Activated B cell treated with CpG ODN at 0.5 μM for 24 hours (primary cell): ENCODE measurements at regions of chr19 and their contacts with region 1.

Region 1: DNA sequence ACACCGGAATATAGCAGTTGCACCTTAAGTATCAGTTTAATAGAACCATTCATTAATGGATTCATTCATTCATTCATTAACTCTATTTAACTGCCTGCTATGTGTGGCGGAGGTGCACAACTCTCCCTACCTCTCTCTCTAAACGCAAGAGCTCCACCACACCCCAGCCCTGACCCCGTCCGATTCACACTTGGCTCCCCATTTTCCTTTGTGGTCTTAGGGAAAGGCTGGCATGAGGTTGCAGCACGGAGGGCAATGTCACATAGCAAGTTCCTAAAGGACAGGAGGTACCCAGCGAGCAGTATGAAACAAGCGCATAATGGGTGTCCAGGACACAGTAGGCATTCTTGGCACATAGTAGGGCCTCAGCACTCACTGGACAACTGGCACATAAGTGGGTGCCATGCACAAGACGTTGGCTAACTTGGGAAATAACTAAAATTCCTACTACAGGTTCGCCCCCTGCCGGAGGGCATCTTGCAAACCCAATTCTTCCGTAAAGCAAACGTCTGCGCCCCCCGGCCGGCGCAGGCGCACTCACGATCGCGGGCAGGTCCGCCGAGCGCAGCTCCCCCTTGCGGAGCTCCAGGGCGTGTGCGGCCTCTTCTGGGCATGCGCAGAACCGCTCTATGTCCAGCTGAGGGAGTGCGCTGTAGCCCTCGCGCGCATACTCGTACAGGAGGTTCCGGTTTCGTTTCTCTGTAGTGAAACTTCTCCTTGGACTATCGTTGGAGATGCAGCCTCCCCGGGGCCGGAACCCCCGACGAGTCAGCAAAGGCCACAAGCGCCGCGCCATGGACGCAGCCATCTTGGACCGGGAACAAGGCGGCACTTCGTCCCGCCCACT is at the start of gene SARS2:
- DNase-seq: peak; percentile 93
- ATAC-seq: peak; percentile 71
- H3K4me3 Mint-ChIP-seq: peak within 1 kb of the TSS; percentile 97
- H3K27ac Mint-ChIP-seq: peak within 1 kb of the TSS; percentile 98
- H3K4me1 Mint-ChIP-seq: peaks cover 34% of the 10 kb centered on the region
- H3K27me3 Mint-ChIP-seq: no peaks in the 10 kb centered on the region
- CTCF ChIP-seq: peak; percentile 100
- total RNA-seq, gene SARS2: 46.4 and 50.9 TPM in 2 replicates

Region 2: DNA sequence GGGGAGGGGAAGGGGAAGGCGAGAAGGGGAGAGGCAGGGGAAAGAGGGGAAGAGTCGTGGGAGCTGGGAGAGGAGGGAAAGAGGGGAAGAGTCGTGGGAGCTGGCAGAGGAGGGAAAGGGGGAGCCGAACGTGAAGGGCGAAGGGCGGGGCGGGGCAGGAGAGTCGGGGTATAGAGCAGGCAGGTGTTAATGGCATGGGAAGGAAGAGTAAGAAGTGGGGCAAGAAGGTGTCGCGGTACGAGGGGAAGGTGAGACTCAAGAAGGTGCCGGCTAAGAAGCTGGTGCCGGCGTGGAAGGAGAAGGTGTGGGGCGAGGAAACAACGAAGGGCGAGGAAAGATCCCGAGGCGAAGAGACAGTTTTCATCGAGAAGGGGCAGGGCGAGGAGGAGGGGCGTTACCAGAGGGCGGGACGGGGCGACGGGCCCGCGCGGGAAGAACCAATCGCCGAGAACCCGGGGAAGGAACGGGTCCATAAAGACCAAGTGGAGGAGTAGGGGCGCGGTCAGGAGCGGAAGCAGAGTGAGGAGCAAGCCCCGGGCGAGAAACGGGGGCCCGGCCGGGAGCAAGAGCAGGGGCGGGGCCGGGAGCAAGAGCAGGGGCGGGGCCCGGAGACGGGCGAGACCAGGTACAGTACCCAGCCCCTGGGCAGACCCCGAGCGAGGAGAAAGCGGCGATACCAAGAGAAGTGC is 594.1 kb before region 1 on chr19:
- CTCF ChIA-PET with region 1: no interaction called
- POLR2A ChIA-PET with region 1: no interaction called
- intact Hi-C with region 1: loop called (anchors 1 kb)
- DNase-seq: peak; percentile 91
- ATAC-seq: peak; percentile 64
- H3K4me3 Mint-ChIP-seq: peak overlapping the region; percentile 91
- H3K27ac Mint-ChIP-seq: peak overlapping the region; percentile 97
- H3K4me1 Mint-ChIP-seq: peaks cover 8% of the 10 kb centered on the region
- H3K27me3 Mint-ChIP-seq: no peaks in the 10 kb centered on the region
- CTCF ChIP-seq: no peak

Region 3: GRCh38 chr19:38544034-38544958 is 385.9 kb before region 1 on chr19:
- CTCF ChIA-PET with region 1: interaction called, 12 read pairs
- POLR2A ChIA-PET with region 1: no interaction called
- intact Hi-C with region 1: loop called (anchors 1 kb)
- DNase-seq: no peak
- ATAC-seq: peak; percentile 65
- H3K4me3 Mint-ChIP-seq: peak overlapping the region; percentile 11
- H3K27ac Mint-ChIP-seq: peak overlapping the region; percentile 30
- H3K4me1 Mint-ChIP-seq: peaks cover 33% of the 10 kb centered on the region
- H3K27me3 Mint-ChIP-seq: no peaks in the 10 kb centered on the region
- CTCF ChIP-seq: peak; percentile 41

Region 4: DNA sequence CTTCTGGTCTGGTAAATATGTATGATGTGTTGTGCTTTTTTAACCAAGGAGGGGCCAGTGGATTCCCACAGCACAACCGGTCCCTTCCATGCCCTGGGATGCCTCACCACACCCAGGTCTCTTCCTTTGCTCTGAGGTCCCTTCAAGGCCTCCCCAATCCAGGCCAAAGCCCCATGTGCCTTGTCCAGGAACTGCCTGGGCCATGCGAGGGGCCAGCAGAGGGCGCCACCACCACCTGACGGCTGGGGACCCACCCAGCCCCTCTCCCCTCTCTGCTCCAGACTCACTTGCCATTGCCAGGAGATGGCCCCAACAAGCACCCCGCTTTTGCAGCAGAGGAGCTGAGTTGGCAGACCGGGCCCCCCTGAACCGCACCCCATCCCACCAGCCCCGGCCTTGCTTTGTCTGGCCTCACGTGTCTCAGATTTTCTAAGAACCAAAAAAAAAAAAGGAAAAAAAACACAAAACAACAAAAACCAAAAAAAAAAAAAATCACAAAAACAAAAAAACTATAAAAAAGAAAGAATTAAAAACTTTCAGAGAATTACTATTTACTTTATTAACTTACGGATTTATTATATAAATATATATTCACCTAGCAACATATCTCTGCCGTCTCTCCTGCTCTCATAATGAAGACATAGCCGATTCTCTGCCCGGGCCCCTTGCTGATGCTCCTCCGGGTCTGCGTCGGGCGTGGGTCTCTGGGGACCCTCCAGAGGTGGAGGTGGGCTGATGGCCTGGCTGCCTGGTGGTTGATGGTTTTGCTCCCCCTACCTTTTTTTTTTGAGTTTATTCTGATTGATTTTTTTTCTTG is 200.3 kb before region 1 on chr19:
- CTCF ChIA-PET with region 1: interaction called, 25 read pairs
- POLR2A ChIA-PET with region 1: interaction called, 16 read pairs
- intact Hi-C with region 1: loop called (anchors 1 kb)
- DNase-seq: peak; percentile 79
- ATAC-seq: peak; percentile 77
- H3K4me3 Mint-ChIP-seq: no peak overlapping the region
- H3K27ac Mint-ChIP-seq: peak overlapping the region; percentile 46
- H3K4me1 Mint-ChIP-seq: peaks cover 25% of the 10 kb centered on the region
- H3K27me3 Mint-ChIP-seq: no peaks in the 10 kb centered on the region
- CTCF ChIP-seq: peak; percentile 54

Region 5: GRCh38 chr19:38743394-38744295 is 186.5 kb before region 1 on chr19:
- CTCF ChIA-PET with region 1: no interaction called
- POLR2A ChIA-PET with region 1: no interaction called
- intact Hi-C with region 1: no loop called
- DNase-seq: no peak
- ATAC-seq: no peak
- H3K4me3 Mint-ChIP-seq: no peak overlapping the region
- H3K27ac Mint-ChIP-seq: no peak overlapping the region
- H3K4me1 Mint-ChIP-seq: no peaks in the 10 kb centered on the region
- H3K27me3 Mint-ChIP-seq: no peaks in the 10 kb centered on the region
- CTCF ChIP-seq: no peak

Region 6: GRCh38 chr19:38812841-38813320 is 117.3 kb before region 1 on chr19 and contains the start of gene LGALS4:
- CTCF ChIA-PET with region 1: no interaction called
- POLR2A ChIA-PET with region 1: no interaction called
- intact Hi-C with region 1: no loop called
- DNase-seq: no peak
- ATAC-seq: no peak
- H3K4me3 Mint-ChIP-seq: no peak within 1 kb of the TSS
- H3K27ac Mint-ChIP-seq: peak within 1 kb of the TSS; percentile 2
- H3K4me1 Mint-ChIP-seq: no peaks in the 10 kb centered on the region
- H3K27me3 Mint-ChIP-seq: no peaks in the 10 kb centered on the region
- CTCF ChIP-seq: no peak
- total RNA-seq, gene LGALS4: 2.7 and 4.5 TPM in 2 replicates

Region 7: DNA sequence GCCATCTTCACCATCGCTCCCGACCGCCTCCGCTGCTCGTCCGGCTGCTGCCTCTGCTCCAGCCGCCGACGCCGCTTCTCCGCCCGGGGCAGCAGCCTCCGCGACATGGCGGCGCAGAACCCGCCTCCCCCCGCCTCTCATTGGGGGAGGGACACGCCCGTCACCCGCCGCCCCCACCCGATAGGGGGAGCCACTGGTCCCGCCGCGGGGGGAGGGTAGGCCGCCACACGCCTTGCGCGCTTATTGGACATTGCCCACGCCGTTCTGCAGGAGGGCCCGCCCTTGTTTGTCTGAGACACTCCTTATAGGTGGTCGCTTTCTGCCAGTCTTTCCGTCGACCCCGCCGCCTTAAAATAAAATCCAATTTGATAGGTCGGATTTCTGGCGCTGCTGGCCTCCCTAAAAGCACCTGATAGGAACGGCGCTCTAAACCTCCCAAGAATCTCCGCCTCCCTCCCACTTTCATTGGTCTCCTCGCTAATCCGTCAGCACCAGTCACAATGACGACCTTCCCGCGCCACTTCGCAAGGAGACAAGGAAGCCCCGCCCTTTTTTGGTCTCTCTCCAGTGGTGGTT is 80.2 kb before region 1 on chr19 and contains the start of gene HNRNPL:
- CTCF ChIA-PET with region 1: no interaction called
- POLR2A ChIA-PET with region 1: interaction called, 24 read pairs
- intact Hi-C with region 1: loop called (anchors 1 kb)
- DNase-seq: peak; percentile 99
- ATAC-seq: peak; percentile 61
- H3K4me3 Mint-ChIP-seq: peak within 1 kb of the TSS; percentile 93
- H3K27ac Mint-ChIP-seq: peak within 1 kb of the TSS; percentile 98
- H3K4me1 Mint-ChIP-seq: peaks cover 61% of the 10 kb centered on the region
- H3K27me3 Mint-ChIP-seq: no peaks in the 10 kb centered on the region
- CTCF ChIP-seq: no peak
- total RNA-seq, gene HNRNPL: 528 and 546 TPM in 2 replicates

Region 8: GRCh38 chr19:38899447-38900219 is 30.5 kb before region 1 on chr19 and contains the starts of genes NFKBIB and SIRT2:
- CTCF ChIA-PET with region 1: interaction called, 10 read pairs
- POLR2A ChIA-PET with region 1: interaction called, 22 read pairs
- intact Hi-C with region 1: loop called (anchors 1 kb)
- DNase-seq: peak; percentile 91
- ATAC-seq: peak; percentile 91
- H3K4me3 Mint-ChIP-seq: peak within 1 kb of the TSS; percentile 91
- H3K27ac Mint-ChIP-seq: peak within 1 kb of the TSS; percentile 87
- H3K4me1 Mint-ChIP-seq: peaks cover 41% of the 10 kb centered on the region
- H3K27me3 Mint-ChIP-seq: no peaks in the 10 kb centered on the region
- CTCF ChIP-seq: no peak
- total RNA-seq, gene NFKBIB: 45.5 and 49.5 TPM in 2 replicates
- total RNA-seq, gene SIRT2: 28.4 and 32.7 TPM in 2 replicates

Region 9: DNA sequence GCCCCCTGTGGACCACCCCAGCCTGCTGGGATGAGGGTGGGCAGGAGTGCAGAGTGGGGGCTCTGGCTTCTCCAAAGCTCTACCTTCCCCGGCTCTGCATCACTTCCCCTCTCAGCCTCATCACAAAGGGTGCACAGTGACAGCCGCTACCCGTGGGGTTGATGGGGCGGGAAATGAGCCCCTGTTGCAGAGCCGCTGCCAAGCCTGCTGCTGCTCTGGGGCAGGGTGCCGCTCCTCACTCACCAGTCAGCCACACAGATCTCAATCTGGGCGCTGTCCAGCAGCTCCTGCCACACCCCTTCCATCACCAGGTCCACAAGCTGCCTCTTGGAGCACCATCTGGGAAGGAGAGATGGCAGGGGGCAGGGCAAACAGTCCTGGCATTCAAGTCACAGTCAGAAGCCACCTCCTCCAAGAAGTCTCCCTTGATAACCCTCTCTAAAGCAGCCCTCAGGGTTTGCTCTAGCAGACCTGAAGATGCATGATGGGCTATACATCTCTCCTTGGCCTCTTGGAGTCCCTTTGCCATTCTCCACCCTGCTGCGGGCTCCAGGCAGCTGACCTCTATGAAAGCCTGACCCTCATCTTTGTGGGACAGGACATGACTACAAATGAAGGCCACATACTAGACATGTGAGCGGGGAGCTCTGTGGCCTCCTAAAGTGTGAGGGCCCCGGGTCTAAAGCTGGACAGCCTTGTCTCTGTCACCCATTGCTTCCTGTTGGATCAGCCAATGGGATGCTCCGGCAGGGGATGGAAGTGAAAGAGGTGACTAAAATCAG is 16.3 kb after region 1 on chr19:
- CTCF ChIA-PET with region 1: no interaction called
- POLR2A ChIA-PET with region 1: no interaction called
- intact Hi-C with region 1: no loop called
- DNase-seq: no peak
- ATAC-seq: no peak
- H3K4me3 Mint-ChIP-seq: no peak overlapping the region
- H3K27ac Mint-ChIP-seq: no peak overlapping the region
- H3K4me1 Mint-ChIP-seq: peaks cover 10% of the 10 kb centered on the region
- H3K27me3 Mint-ChIP-seq: peaks cover 20% of the 10 kb centered on the region
- CTCF ChIP-seq: no peak